ENCODE measurements at regions of chr18 and their contacts with region 1.

Region 1: GRCh38 chr18:3245853-3246634 is 1.6 kb upstream of the MYL12A start:
- DNase-seq: peak; percentile 85
- H3K4me3 ChIP-seq: peak overlapping the region; percentile 46 to 96 (median 48)
- H3K27ac ChIP-seq: peak overlapping the region; percentile 99
- H3K4me1 ChIP-seq: peaks cover 29% of the 10 kb centered on the region
- H3K27me3 ChIP-seq: no peaks in the 10 kb centered on the region
- CTCF ChIP-seq: peak; percentile 97 to 98

Region 2: DNA sequence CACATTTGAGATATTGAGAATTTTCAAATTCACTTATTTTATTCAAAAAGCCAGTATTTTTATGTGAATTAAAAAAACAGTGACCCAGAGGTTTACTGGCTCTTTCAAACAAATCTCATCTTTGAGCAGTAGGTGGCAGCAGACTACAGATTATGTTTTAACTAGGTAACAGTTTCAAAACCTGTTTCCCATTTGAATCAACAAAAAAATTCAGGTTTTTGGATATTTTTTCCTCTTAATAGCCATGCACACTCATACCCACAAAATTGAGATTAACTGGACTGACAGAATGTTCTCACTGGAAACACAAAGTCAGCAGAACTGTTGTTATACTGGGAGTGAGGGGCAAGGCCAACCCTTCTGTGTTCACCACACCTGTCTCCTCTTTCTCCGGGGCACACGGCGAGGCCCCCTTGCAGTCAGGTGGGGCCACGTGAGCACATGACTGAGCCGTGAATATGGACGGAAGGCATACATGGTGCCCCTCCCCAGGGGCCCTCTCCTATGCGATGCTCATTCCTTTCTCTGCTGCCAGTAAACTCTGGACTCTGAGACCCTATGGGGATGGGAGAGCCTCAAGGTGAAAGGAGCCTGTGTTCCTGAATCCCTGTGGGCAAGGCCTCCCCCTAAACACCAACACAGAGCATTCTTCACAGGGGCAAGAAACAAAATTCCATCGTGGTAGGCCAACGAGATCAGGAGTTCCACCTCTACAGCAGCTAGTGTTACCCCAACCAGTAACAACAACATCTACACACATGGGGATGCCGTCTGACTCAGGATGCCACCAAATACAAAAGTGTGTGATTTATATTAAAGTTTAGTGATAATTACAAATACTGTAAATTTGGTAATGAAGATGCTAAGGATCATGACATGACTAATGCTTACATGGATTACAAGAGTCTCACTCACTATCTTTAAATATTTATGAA is 313.5 kb before region 1 on chr18:
- CTCF ChIA-PET with region 1: interaction called, 3 read pairs
- dilution Hi-C with region 1: no loop called
- in situ Hi-C with region 1: loop called in 1 of 2 experiments (anchors 5 kb)
- intact Hi-C with region 1: loop called (anchors 1 kb)
- DNase-seq: peak; percentile 29
- H3K4me3 ChIP-seq: no peak overlapping the region
- H3K27ac ChIP-seq: no peak overlapping the region
- H3K4me1 ChIP-seq: no peaks in the 10 kb centered on the region
- H3K27me3 ChIP-seq: no peaks in the 10 kb centered on the region
- CTCF ChIP-seq: peak; percentile 61 to 65

Region 3: GRCh38 chr18:2985628-2986027 is 260.4 kb before region 1 on chr18:
- CTCF ChIA-PET with region 1: no interaction called
- dilution Hi-C with region 1: no loop called
- in situ Hi-C with region 1: no loop called
- intact Hi-C with region 1: loop called (anchors 5 kb)
- DNase-seq: peak; percentile 13
- H3K4me3 ChIP-seq: no peak overlapping the region
- H3K27ac ChIP-seq: no peak overlapping the region
- H3K4me1 ChIP-seq: peaks cover 8% of the 10 kb centered on the region
- H3K27me3 ChIP-seq: no peaks in the 10 kb centered on the region
- CTCF ChIP-seq: peak; percentile 47 to 48

Region 4: GRCh38 chr18:3119401-3120335 is 126.4 kb before region 1 on chr18:
- CTCF ChIA-PET with region 1: no interaction called
- dilution Hi-C with region 1: no loop called
- in situ Hi-C with region 1: no loop called
- intact Hi-C with region 1: loop called (anchors 2 kb)
- DNase-seq: peak; percentile 52
- H3K4me3 ChIP-seq: no peak overlapping the region
- H3K27ac ChIP-seq: no peak overlapping the region
- H3K4me1 ChIP-seq: no peaks in the 10 kb centered on the region
- H3K27me3 ChIP-seq: no peaks in the 10 kb centered on the region
- CTCF ChIP-seq: no peak

Region 5: GRCh38 chr18:3261371-3262246 is 15.6 kb after region 1 on chr18 and contains the start of gene MYL12B:
- CTCF ChIA-PET with region 1: no interaction called
- dilution Hi-C with region 1: no loop called
- in situ Hi-C with region 1: no loop called
- intact Hi-C with region 1: loop called (anchors 2 kb)
- DNase-seq: peak; percentile 82
- H3K4me3 ChIP-seq: peak within 1 kb of the TSS; percentile 77 to 93 (median 85)
- H3K27ac ChIP-seq: peak within 1 kb of the TSS; percentile 97
- H3K4me1 ChIP-seq: peaks cover 27% of the 10 kb centered on the region
- H3K27me3 ChIP-seq: no peaks in the 10 kb centered on the region
- CTCF ChIP-seq: peak in 1 of 2 donors; percentile 8
- total RNA-seq, gene MYL12B: 464 to 468 TPM

Region 6: GRCh38 chr18:3294435-3295080 is 48.5 kb after region 1 on chr18:
- CTCF ChIA-PET with region 1: no interaction called
- dilution Hi-C with region 1: no loop called
- in situ Hi-C with region 1: no loop called
- intact Hi-C with region 1: no loop called
- DNase-seq: peak; percentile 19
- H3K4me3 ChIP-seq: no peak overlapping the region
- H3K27ac ChIP-seq: no peak overlapping the region
- H3K4me1 ChIP-seq: peaks cover 7% of the 10 kb centered on the region
- H3K27me3 ChIP-seq: no peaks in the 10 kb centered on the region
- CTCF ChIP-seq: no peak

Region 7: GRCh38 chr18:3388982-3389381 is 142.9 kb after region 1 on chr18:
- CTCF ChIA-PET with region 1: no interaction called
- dilution Hi-C with region 1: no loop called
- in situ Hi-C with region 1: no loop called
- intact Hi-C with region 1: no loop called
- DNase-seq: peak; percentile 79
- H3K4me3 ChIP-seq: no peak overlapping the region
- H3K27ac ChIP-seq: peak overlapping the region; percentile 1
- H3K4me1 ChIP-seq: peaks cover 5% of the 10 kb centered on the region
- H3K27me3 ChIP-seq: no peaks in the 10 kb centered on the region
- CTCF ChIP-seq: no peak